Activated T-helper 2 cell treated with anti-CD3 and anti-CD28 coated beads, Interferon-gamma antibody, Interleukin-2, Interleukin-4, amounts not matched to agents 10 μg/mL and 5 μg/mL and 100 μg/mL, durations not matched to agents 14 hours and 24 hours and 36 hours (primary cell): ENCODE measurements at regions of chr6 and their contacts with region 1.

Region 1: GRCh38 chr6:111259089-111259831 is 172.0 kb downstream of the SLC16A10 start:
- DNase-seq: peak; percentile 99
- H3K4me3 Mint-ChIP-seq: peak overlapping the region; percentile 78
- H3K27ac Mint-ChIP-seq: peak overlapping the region; percentile 63
- H3K4me1 Mint-ChIP-seq: peaks cover 27% of the 10 kb centered on the region
- H3K27me3 Mint-ChIP-seq: peaks cover 12% of the 10 kb centered on the region

Region 2: GRCh38 chr6:111207141-111207850 is 52.0 kb before region 1 on chr6:
- intact Hi-C with region 1: no loop called
- DNase-seq: no peak
- H3K4me3 Mint-ChIP-seq: no peak overlapping the region
- H3K27ac Mint-ChIP-seq: no peak overlapping the region
- H3K4me1 Mint-ChIP-seq: no peaks in the 10 kb centered on the region
- H3K27me3 Mint-ChIP-seq: no peaks in the 10 kb centered on the region

Region 3: DNA sequence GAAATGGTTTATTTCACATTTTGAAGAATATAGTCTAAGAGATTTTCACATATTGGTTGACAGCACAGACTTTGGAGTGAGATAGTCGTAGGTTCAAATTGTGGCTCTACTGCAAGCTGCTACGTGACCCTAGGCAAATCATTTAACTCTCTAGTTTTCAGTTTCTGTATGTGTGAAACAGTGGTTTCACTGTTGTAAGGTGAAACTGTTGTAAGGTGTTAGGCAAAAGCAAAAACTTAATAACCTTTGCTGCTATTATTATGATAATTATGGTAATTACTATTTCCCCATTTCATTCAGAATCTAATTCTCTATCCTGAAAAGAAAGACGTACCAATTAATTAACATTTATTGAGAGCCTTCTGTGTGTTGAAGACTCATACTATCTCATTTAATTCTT is 79.6 kb after region 1 on chr6:
- intact Hi-C with region 1: loop called (anchors 2 kb)
- DNase-seq: no peak
- H3K4me3 Mint-ChIP-seq: no peak overlapping the region
- H3K27ac Mint-ChIP-seq: peak overlapping the region; percentile 1
- H3K4me1 Mint-ChIP-seq: peaks cover 20% of the 10 kb centered on the region
- H3K27me3 Mint-ChIP-seq: no peaks in the 10 kb centered on the region

Region 4: GRCh38 chr6:111483736-111484632 is 224.7 kb after region 1 on chr6:
- intact Hi-C with region 1: loop called (anchors 1 kb)
- DNase-seq: no peak
- H3K4me3 Mint-ChIP-seq: peak overlapping the region; percentile 91
- H3K27ac Mint-ChIP-seq: peak overlapping the region; percentile 96
- H3K4me1 Mint-ChIP-seq: peaks cover 50% of the 10 kb centered on the region
- H3K27me3 Mint-ChIP-seq: no peaks in the 10 kb centered on the region

Region 5: DNA sequence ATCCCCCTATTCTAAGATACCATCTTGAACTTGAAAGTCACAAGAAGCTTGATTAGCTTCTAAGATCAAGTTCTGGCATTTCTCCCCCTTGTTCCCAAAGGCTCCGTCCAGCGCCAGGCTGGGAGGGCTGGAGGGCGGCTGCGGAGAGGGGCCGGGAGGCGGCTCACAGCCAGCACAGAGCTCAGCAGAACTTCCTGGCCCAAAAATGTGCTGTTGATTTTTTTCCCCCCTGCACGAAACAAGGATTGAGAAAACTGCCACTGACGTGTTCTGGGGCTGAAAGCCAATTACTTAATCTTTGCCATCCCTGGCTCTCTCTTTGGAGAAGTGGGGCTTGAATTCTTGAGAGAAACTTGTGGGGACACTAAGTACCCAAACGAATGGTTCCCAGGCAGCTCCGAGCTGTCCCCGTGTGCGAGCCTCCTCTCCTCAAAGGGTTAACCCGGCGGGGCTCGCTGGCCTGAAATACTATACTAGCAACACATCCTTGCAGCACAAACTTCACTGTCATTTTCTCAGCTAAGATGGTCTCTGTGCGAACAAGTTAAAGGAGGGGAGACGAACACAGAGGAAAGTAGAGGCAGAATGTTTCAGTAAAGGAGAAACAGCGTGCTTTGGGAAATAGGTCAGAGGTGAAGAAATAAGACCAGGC is 346.0 kb after region 1 on chr6:
- intact Hi-C with region 1: loop called (anchors 1 kb)
- DNase-seq: peak; percentile 15
- H3K4me3 Mint-ChIP-seq: peak overlapping the region; percentile 90
- H3K27ac Mint-ChIP-seq: peak overlapping the region; percentile 98
- H3K4me1 Mint-ChIP-seq: peaks cover 49% of the 10 kb centered on the region
- H3K27me3 Mint-ChIP-seq: no peaks in the 10 kb centered on the region

Region 6: DNA sequence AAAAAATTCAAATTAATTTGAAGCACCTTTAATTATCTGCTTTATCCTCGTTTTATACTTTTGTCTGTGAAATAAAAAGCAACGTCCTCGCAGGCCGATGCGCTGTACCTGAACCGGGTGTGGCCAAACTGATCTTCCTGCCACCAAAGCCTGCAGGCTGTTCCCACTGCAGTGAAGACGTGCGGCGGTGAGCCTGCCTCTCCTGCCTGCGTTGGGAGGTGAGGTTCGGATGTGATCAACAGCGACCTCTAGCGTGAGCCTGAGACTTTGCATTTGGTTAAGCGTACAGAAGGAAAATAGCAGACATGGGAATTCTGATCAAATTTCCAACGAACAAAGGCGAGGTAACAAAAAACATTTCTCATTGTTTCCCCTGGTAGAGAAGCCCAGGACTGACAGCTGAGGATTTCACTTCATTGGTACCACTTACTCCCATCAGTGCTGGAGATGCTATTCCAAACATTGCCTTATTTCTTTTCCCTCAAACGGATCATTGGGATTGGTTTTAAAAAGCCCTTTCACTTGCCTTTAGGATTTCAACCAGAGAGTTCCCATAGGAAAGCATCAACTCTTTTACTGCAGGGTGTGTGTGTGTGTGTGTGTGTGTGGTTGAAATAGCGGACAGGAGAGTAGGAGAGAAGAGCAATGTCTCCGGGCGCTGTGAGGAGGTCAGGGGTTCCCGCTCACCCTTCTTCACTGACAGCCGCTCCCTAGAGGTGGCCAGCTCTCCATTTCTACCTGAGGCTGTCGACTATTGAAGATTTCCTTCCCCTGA is 738.0 kb after region 1 on chr6:
- intact Hi-C with region 1: loop called (anchors 5 kb)
- DNase-seq: peak; percentile 69
- H3K4me3 Mint-ChIP-seq: no peak overlapping the region
- H3K27ac Mint-ChIP-seq: no peak overlapping the region
- H3K4me1 Mint-ChIP-seq: peaks cover 37% of the 10 kb centered on the region
- H3K27me3 Mint-ChIP-seq: no peaks in the 10 kb centered on the region

Region 7: GRCh38 chr6:112163295-112164257 is 904.3 kb after region 1 on chr6:
- intact Hi-C with region 1: loop called (anchors 2 kb)
- DNase-seq: peak; percentile 61
- H3K4me3 Mint-ChIP-seq: peak overlapping the region; percentile 45
- H3K27ac Mint-ChIP-seq: no peak overlapping the region
- H3K4me1 Mint-ChIP-seq: peaks cover 16% of the 10 kb centered on the region
- H3K27me3 Mint-ChIP-seq: peaks cover 55% of the 10 kb centered on the region